AG04450 (cell line): ENCODE measurements at regions of chr2 and their contacts with region 1.

Region 1: GRCh38 chr2:172107690-172108586 is 5.2 kb upstream of the DLX2 start:
- DNase-seq: no peak
- H3K4me3 ChIP-seq: no peak overlapping the region
- H3K27ac ChIP-seq: no peak overlapping the region
- H3K27me3 ChIP-seq: no peaks in the 10 kb centered on the region
- CTCF ChIP-seq: no peak

Region 2: DNA sequence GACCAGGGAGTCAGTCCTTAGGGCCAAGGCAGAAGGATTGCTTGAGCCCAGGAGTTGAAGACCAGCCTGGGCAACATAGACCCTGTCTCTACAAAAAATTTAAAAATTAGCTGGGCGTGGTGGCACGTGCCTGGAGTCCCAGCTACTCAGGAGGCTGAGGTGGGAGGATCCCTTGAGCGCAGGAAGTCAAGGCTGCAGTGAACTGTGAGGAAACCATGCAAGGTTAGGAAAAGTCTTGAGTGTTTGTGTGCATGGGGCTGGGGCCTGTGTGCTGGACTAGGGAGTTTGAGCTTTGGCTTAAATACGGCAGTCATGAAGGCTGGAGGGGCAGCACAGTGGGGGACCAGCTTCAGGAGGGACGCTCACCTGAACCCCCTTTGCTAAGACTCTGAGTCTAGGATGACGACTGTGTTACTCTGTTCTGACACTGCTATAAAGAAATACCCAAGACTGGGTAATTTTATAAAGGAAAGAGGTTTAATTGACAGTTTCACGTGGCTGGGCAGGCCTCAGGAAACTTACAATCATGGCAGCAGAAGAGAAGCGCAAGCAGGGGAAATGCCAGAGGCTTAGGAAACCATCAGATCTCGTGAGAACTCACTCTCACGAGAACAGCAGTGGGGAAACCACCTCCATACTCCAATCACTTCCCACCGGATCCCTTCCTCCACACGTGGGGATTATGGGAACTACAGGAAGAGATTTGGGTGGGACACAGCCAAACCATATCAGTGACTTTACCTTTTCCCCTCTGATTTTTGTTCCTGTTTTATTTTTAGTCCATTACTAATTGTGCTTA is 1139.5 kb before region 1 on chr2:
- CTCF ChIA-PET with region 1: no interaction called
- POLR2A ChIA-PET with region 1: interaction called, 11 read pairs
- DNase-seq: no peak
- H3K4me3 ChIP-seq: no peak overlapping the region
- H3K27ac ChIP-seq: no peak overlapping the region
- H3K27me3 ChIP-seq: no peaks in the 10 kb centered on the region
- CTCF ChIP-seq: no peak

Region 3: DNA sequence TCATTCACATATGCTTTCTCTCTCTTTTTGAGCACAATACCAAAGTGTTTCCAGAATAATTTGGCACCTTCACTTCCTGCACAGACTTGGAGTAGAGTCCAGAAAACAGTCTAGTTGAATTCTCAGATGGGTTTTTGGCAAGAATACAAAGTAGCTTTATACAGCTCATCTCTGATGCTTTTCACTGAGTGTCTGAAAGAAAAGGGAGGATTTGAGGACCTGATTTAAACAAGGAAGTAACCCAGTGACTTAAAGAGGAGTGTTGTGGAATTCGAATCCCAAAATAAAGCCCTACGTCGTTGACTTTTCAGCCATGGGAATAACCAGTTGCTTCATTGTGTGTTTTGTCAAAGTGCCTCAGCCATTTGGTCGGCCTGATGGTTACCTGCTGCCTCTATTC is 76.4 kb before region 1 on chr2:
- CTCF ChIA-PET with region 1: no interaction called
- POLR2A ChIA-PET with region 1: no interaction called
- DNase-seq: no peak
- H3K4me3 ChIP-seq: no peak overlapping the region
- H3K27ac ChIP-seq: no peak overlapping the region
- H3K27me3 ChIP-seq: no peaks in the 10 kb centered on the region
- CTCF ChIP-seq: no peak